MCF 10A (cell line): ENCODE measurements at regions of chr6 and their contacts with region 1.

Region 1: DNA sequence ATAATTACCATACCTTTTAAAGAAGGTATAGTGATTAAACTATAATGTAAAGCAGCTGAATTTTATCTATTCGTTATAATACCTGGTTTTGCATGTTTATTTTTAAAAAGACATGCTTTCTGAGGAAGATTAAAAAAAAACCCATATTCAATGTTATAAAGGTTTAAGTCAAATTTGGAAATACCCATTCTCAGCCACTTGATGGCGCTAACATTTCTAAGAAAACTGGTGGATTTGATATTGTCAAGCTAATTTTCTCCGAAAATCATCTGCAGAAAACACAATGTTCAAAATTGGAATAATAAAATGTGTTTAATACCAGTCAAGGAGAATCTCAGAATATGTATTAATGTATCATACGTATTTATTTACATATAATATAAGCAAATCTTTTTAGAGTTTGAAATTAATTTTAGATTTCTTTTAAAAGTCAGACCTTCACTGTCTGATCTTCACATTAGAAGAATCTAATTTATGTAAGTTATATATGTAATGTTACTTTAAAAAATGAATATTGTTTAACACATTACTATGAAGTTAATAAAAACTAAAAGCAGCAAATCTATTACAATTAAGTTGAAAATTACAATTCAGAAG is 35.0 kb downstream of the SHPRH start:
- DNase-seq: peak; percentile 48
- H3K4me3 Mint-ChIP-seq: no peak overlapping the region
- H3K27ac Mint-ChIP-seq: no peak overlapping the region
- H3K4me1 Mint-ChIP-seq: no peaks in the 10 kb centered on the region
- H3K27me3 Mint-ChIP-seq: no peaks in the 10 kb centered on the region
- CTCF ChIP-seq: peak; percentile 55

Region 2: GRCh38 chr6:145948328-145948727 is 19.2 kb after region 1 on chr6:
- CTCF ChIA-PET with region 1: interaction called, 20 read pairs
- POLR2A ChIA-PET with region 1: no interaction called
- intact Hi-C with region 1: no loop called
- DNase-seq: no peak
- H3K4me3 Mint-ChIP-seq: no peak overlapping the region
- H3K27ac Mint-ChIP-seq: no peak overlapping the region
- H3K4me1 Mint-ChIP-seq: no peaks in the 10 kb centered on the region
- H3K27me3 Mint-ChIP-seq: no peaks in the 10 kb centered on the region
- CTCF ChIP-seq: no peak

Region 3: GRCh38 chr6:146335336-146335735 is 406.2 kb after region 1 on chr6:
- CTCF ChIA-PET with region 1: no interaction called
- POLR2A ChIA-PET with region 1: no interaction called
- intact Hi-C with region 1: no loop called
- DNase-seq: no peak
- H3K4me3 Mint-ChIP-seq: no peak overlapping the region
- H3K27ac Mint-ChIP-seq: no peak overlapping the region
- H3K4me1 Mint-ChIP-seq: peaks cover 7% of the 10 kb centered on the region
- H3K27me3 Mint-ChIP-seq: no peaks in the 10 kb centered on the region
- CTCF ChIP-seq: no peak

Region 4: GRCh38 chr6:146526192-146526591 is 597.1 kb after region 1 on chr6:
- CTCF ChIA-PET with region 1: no interaction called
- POLR2A ChIA-PET with region 1: no interaction called
- intact Hi-C with region 1: loop called (anchors 5 kb)
- DNase-seq: peak; percentile 6
- H3K4me3 Mint-ChIP-seq: no peak overlapping the region
- H3K27ac Mint-ChIP-seq: no peak overlapping the region
- H3K4me1 Mint-ChIP-seq: no peaks in the 10 kb centered on the region
- H3K27me3 Mint-ChIP-seq: no peaks in the 10 kb centered on the region
- CTCF ChIP-seq: peak; percentile 21